ENCODE measurements at regions of chr5 and their contacts with region 1.

Region 1: GRCh38 chr5:156981481-156981880 is 18.5 kb upstream of the TIMD4 start:
- DNase-seq: no peak
- H3K27ac ChIP-seq: no peak overlapping the region
- CTCF ChIP-seq: no peak

Region 2: DNA sequence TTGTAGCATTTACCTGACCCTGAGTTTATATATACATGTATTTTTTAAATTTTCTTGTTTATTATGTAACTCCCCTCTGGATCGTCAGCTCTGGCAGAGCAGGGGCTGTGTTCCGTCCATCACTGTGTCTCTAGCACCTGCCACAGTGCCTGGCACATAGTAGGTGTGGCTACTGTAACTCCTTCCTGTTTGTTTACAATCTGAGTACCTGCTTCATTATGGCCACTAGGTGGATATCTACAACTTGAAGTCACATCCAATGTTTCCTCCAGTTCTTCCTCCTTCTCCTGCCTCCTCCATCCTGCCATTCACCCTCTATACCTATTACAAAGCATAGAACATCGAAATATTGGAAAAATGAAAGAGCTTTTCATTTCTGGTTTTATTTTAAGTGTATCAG is 145.6 kb before region 1 on chr5:
- CTCF ChIA-PET with region 1: no interaction called
- POLR2A ChIA-PET with region 1: no interaction called
- DNase-seq: no peak
- H3K27ac ChIP-seq: no peak overlapping the region
- CTCF ChIP-seq: no peak

Region 3: DNA sequence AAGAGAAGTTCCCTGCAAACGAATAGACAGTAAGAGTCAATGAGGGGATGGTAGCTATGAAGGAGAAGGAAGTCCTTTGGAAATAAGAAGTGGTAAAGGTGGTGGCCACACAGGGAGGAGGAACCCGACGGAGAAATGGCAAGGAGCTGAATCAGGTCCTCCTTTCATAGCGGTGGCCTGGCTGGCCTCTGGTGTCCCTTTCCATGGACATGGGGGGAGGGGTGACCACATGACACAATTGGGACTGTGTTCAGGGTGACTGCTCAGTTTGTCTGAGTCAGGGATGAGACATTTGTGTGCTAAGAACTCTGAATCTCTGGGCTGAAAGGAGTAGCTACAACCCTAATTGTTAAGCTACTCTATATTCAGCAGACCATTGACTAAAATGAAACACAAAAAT is 10.2 kb after region 1 on chr5:
- CTCF ChIA-PET with region 1: no interaction called
- POLR2A ChIA-PET with region 1: interaction called, 14 read pairs
- DNase-seq: no peak
- H3K27ac ChIP-seq: no peak overlapping the region
- CTCF ChIP-seq: no peak

Region 4: GRCh38 chr5:157076558-157076957 is 95.1 kb after region 1 on chr5:
- CTCF ChIA-PET with region 1: no interaction called
- POLR2A ChIA-PET with region 1: no interaction called
- DNase-seq: peak; percentile 14
- H3K27ac ChIP-seq: no peak overlapping the region
- CTCF ChIP-seq: no peak